Activated CD8-positive, alpha-beta T cell treated with anti-CD3 and anti-CD28 coated beads, Interleukin-2, amount 10 ng/mL, durations not matched to agents 7 days and 5 days (primary cell): ENCODE measurements at regions of chr2 and their contacts with region 1.

Region 1: DNA sequence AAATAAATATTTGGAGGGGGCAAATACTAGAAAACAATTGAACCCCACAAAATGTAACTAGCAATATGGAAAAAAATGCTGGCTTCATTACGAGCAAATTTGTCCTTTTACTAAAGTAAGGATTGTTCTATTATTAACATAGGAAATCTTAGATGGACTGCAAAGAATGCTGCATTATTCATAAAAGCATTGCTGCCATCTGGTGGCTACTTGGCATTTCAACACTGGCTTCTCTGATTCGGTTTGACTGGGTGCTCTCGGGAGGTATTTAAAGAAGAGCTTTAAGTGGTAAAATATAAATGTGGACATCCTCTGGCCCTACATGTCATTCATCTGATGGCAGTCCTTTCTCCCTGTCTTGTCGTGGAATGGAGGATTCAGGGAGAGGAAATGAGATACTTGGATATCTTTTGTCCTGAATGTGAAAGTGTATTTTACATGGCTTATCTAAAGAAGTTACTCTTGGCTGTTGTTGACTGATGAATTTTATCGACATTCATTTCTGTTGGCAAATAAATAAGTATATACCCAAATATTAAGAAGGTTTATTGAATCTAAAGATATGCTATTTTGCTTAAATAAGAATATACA is 130.2 kb downstream of the ARHGAP15 start:
- DNase-seq: peak; percentile 87
- ATAC-seq: peak; percentile 40
- H3K4me3 Mint-ChIP-seq: peak overlapping the region; percentile 67
- H3K27ac Mint-ChIP-seq: peak overlapping the region; percentile 98
- H3K4me1 Mint-ChIP-seq: peaks cover 79% of the 10 kb centered on the region
- H3K27me3 Mint-ChIP-seq: no peaks in the 10 kb centered on the region

Region 2: DNA sequence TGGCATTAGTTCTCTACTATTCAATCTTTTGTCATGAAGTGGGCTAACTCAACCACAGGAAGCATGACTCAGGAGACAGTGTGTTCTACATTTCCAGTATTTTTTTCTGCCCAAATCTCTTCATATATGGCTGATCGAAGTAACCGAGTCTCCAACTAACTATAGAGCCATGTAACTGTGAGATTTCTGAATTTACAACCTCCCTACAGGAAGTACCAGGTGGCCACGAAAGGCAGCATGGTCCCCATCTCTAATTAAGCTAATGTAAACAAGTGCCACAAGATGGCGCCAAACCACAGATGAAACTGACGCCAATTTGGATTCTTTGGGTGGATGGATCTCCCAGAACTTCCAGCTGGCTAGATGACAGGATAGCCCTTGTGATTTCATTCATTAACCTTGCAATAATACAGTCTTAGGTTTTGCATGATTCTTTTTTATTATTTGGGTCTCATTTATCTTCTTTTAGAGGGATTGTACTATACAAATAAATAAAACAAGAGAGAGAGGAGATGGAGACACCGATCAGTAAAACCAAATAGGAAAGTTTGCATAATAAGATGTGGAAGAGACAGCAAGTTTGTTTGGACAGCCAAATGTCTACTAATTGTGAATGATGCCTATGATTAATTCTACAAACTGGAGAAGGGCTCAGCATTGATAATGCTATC is 148.6 kb before region 1 on chr2:
- CTCF ChIA-PET with region 1: interaction called, 126 read pairs
- POLR2A ChIA-PET with region 1: interaction called, 13 read pairs
- DNase-seq: peak; percentile 83
- ATAC-seq: peak; percentile 92
- H3K4me3 Mint-ChIP-seq: peak overlapping the region; percentile 51
- H3K27ac Mint-ChIP-seq: peak overlapping the region; percentile 92
- H3K4me1 Mint-ChIP-seq: peaks cover 38% of the 10 kb centered on the region
- H3K27me3 Mint-ChIP-seq: no peaks in the 10 kb centered on the region

Region 3: DNA sequence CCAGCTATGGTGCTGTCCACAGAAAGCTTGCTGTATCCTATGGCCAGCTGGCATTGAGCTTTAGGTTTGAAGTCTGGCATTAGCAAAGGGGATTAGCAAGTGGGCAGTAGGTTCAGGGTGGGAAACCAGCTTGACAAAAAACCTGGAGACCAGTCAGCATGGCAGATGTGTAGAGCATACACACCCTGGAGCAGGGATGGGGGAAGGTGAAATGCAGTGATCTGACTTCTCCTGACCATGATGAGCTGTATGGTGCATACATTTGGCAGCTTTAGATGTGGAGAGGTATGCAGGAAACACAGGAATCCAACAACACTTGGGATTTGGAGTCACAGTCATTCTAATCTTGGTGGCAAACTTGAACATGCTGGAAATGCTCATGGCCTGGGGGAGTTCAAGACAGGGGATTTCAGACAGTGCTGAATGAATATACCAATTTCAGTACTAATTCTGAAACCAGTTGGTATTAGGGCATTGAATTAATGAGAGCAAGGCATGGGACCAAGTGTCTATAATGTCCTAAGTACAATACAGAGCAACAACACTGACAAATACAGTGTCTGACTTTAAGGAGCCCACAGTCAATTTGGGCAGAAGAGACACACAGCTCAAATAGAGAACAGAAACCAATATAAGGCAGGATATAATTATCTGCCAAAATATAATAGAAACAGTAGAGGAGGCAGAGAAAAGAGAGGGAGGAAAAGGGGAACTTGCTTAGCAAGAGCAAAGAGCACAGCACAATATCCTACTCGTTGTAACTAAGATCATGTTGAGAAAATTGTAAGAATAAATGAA is 118.4 kb before region 1 on chr2:
- CTCF ChIA-PET with region 1: interaction called, 12 read pairs
- POLR2A ChIA-PET with region 1: no interaction called
- DNase-seq: no peak
- ATAC-seq: no peak
- H3K4me3 Mint-ChIP-seq: no peak overlapping the region
- H3K27ac Mint-ChIP-seq: no peak overlapping the region
- H3K4me1 Mint-ChIP-seq: peaks cover 81% of the 10 kb centered on the region
- H3K27me3 Mint-ChIP-seq: no peaks in the 10 kb centered on the region

Region 4: DNA sequence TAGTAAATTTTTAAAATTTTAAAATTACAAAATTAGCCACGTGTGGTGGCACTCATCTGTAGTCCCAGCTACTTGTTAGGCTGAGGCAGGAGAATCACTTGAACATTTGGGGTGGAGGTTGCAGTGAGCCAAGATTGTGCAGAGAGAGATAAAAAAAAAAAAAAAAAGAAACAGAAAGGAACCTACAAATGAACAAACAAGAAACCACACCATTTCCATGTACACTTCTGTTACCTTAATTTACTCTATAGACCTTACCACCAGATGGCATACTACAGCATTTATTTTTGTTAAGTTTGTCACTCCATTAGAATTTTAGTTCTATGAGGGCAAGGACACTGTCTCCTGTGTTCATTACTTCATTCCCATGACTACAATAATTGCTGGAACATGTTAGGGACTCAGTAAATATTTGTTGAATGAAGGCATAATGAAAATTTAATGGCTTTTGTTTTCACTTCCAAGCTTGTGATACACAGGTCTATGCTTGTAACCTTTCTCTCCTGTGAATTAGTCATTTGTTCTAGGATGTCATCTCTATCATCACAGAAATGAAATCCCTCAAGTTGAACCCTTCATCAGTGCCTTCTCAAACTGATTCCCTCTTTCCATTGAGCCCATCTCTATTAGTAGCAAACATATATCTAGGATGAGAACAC is 54.2 kb before region 1 on chr2:
- CTCF ChIA-PET with region 1: interaction called, 112 read pairs
- POLR2A ChIA-PET with region 1: interaction called, 4 read pairs
- DNase-seq: no peak
- ATAC-seq: peak; percentile 77
- H3K4me3 Mint-ChIP-seq: no peak overlapping the region
- H3K27ac Mint-ChIP-seq: peak overlapping the region; percentile 74
- H3K4me1 Mint-ChIP-seq: peaks cover 48% of the 10 kb centered on the region
- H3K27me3 Mint-ChIP-seq: no peaks in the 10 kb centered on the region

Region 5: DNA sequence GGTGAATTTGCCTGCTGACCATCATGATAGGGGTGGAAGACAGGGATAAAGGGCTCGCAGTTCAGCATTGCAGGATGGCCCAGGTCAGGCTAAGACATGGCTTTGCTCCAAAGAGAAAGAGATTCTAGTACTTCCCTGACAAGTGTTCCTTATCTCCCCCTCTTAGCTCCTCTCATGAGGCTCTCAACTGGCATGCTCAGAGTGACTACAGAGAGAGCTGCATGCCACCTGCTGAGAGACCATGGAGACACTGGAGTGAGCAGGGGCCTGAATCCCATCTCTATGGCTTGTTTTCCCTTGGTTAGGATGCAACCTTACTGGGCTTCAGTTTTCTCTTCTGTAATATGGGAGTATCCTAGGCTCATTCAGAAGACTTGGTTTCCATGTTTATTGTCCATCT is 35.9 kb before region 1 on chr2:
- CTCF ChIA-PET with region 1: interaction called, 47 read pairs
- POLR2A ChIA-PET with region 1: interaction called, 4 read pairs
- DNase-seq: no peak
- ATAC-seq: no peak
- H3K4me3 Mint-ChIP-seq: no peak overlapping the region
- H3K27ac Mint-ChIP-seq: peak overlapping the region; percentile 17
- H3K4me1 Mint-ChIP-seq: peaks cover 46% of the 10 kb centered on the region
- H3K27me3 Mint-ChIP-seq: no peaks in the 10 kb centered on the region

Region 6: DNA sequence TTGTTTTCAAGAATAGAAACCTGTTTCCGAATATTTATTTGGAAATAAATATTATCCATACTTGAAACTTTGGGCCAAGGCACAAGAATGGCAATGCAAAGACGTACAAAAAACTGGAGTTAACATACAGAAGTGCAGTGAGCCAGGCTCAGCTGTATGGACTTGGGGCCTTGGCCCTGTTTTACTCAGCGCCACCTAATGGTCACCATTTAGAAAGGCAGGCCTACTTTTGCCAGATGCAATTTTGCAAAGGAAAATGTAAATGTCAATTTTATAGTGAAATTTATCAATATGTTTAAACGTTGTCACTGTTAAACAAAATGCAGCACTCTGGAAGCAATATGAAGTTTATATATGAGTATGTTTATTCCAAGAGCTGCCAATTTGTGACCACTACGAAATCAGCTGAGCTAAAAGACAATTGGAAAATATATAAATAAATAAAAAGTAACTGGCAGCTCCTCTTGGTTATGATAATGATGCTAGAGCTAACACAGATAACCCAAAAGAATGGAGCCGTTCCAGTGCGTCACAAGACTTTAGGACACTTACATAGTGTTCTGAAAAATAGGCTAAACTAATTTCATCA is 24.7 kb after region 1 on chr2:
- CTCF ChIA-PET with region 1: interaction called, 96 read pairs
- POLR2A ChIA-PET with region 1: interaction called, 3 read pairs
- DNase-seq: peak; percentile 50
- ATAC-seq: no peak
- H3K4me3 Mint-ChIP-seq: no peak overlapping the region
- H3K27ac Mint-ChIP-seq: no peak overlapping the region
- H3K4me1 Mint-ChIP-seq: peaks cover 13% of the 10 kb centered on the region
- H3K27me3 Mint-ChIP-seq: no peaks in the 10 kb centered on the region